ENCODE measurements at regions of chr2 and their contacts with region 1.

Region 1: DNA sequence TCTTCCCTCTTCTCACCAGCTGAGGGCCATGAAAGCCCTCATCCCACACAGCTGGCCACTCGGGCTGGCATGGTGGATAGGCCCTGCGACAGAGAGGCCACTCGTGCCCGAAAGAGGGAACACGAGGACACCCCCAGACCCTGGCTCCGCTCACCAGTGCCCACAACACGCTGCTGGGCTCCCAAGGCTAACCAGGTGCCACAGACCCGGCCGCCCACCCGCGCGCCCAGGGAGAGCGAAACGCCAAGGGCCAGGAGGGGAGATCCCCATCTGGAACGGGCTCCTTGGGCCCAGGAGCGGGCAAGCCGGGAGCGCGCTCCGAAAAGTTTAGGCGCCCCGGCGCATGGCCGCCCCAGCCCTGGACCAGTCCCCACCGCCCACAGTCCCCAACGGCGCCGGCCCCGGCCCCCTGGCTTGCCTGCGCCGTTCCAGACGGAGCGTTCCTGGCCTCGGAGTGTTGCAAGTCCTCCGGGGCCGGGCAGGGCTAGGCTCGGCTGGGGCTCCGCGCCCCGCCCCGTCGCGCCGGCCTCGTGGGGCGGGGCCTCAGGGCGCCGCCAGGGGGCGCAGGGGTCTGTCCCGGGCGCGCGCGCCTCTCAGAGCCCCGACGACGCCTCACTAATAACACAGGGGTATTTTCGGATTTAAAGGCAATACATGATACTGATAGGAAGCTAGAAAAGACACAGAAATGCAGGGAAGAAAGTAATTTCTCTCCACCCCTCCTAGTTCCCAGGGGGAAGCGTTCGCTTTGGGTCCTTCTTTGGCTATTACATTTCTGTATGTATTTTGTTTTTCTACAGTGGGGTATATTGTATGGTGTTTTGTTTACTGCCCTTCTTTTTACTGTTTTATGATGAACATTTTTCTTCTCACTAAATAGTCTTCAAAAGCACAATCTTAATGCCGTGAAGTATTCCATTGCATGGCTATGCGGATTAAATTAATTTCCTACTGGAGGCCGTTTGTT is at the start of gene TMBIM1:
- DNase-seq: peak; percentile 74 to 85
- ATAC-seq: peak; percentile 83 to 96 (median 88)
- H3K4me3 ChIP-seq: peak within 1 kb of the TSS; percentile 71 to 99 (median 92)
- H3K27ac ChIP-seq: peak within 1 kb of the TSS; percentile 95 to 100 (median 98)
- H3K4me1 ChIP-seq: peaks cover 16 to 72% (median 48%) of the 10 kb centered on the region in 9 donors
- H3K27me3 ChIP-seq: no peaks in the 10 kb centered on the region
- CTCF ChIP-seq: peak; percentile 76 to 99 (median 96)
- total RNA-seq, gene TMBIM1: 85.3 to 151 (median 110) TPM

Region 2: GRCh38 chr2:218216674-218217359 is 75.5 kb before region 1 on chr2 and contains the start of gene ARPC2:
- intact Hi-C with region 1: loop called in 1 of 10 experiments (anchors 2 kb)
- DNase-seq: peak; percentile 95 to 96
- ATAC-seq: peak; percentile 97 to 99 (median 98)
- H3K4me3 ChIP-seq: peak within 1 kb of the TSS; percentile 78 to 97 (median 94)
- H3K27ac ChIP-seq: peak within 1 kb of the TSS; percentile 58 to 99 (median 94)
- H3K4me1 ChIP-seq: peaks cover 11 to 53% (median 44%) of the 10 kb centered on the region in 9 donors
- H3K27me3 ChIP-seq: no peaks in the 10 kb centered on the region
- CTCF ChIP-seq: peak in 2 of 9 donors; percentile 5 to 20
- total RNA-seq, gene ARPC2: 120 to 213 (median 134) TPM

Region 3: GRCh38 chr2:218466016-218466521 is 173.7 kb after region 1 on chr2:
- intact Hi-C with region 1: loop called in 3 of 10 experiments (anchors 5 to 10 kb)
- DNase-seq: no peak
- ATAC-seq: peak in 3 of 8 donors; percentile 37 to 53 (median 44)
- H3K4me3 ChIP-seq: no peak overlapping the region
- H3K27ac ChIP-seq: no peak overlapping the region
- H3K4me1 ChIP-seq: peaks cover 0 to 8% (median 0%) of the 10 kb centered on the region in 9 donors
- H3K27me3 ChIP-seq: no peaks in the 10 kb centered on the region
- CTCF ChIP-seq: peak in 8 of 9 donors; percentile 30 to 68 (median 60)

Region 4: DNA sequence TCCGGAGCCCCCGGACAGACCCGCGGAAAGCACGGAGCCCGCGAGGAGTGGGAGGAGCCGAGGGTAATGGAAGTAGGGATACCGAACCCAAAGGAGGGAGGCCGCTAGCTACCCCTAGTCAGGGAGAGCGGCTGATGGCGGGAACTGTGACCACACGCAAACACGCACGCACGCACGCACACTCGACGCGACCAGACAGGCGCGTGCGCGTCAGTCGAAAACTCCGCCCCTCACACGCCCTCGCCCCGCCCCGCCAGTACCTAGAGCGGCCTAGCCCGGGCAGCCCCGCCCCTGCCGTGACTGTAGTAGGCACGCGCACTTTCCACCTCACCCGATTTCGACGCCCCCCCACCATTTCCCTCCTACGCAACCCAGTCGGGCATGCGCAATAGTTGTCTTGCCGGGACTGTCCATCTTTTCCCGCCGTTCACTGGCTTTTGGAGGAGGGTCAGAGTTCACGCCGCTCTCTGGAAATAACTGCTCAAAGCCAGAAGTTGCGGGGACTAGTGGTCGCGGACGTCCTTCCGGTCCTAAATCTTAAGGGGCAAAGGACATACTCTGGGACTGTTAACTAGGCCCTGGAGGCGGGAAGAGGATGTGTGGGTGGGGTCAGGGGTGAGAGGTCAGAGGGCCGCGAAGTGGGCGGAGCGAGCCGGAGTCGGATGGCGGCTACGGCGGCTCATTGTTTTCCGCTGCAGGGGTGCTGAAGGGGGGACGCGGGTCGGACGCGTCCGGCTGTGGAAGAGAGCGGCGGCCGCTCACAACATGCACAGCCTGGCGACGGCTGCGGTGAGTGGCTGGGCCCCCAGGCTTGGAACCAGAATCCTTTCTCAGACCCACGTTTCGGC is 276.1 kb after region 1 on chr2 and contains the starts of genes CNOT9 and USP37:
- intact Hi-C with region 1: loop called in 1 of 10 experiments (anchors 10 kb)
- DNase-seq: peak; percentile 100
- ATAC-seq: peak; percentile 97 to 99 (median 98)
- H3K4me3 ChIP-seq: peak within 1 kb of the TSS; percentile 61 to 96 (median 84)
- H3K27ac ChIP-seq: peak within 1 kb of the TSS; percentile 68 to 97 (median 94)
- H3K4me1 ChIP-seq: peaks cover 8 to 49% (median 45%) of the 10 kb centered on the region in 9 donors
- H3K27me3 ChIP-seq: no peaks in the 10 kb centered on the region
- CTCF ChIP-seq: no peak
- total RNA-seq, gene CNOT9: 15.7 to 28.2 (median 21.1) TPM
- total RNA-seq, gene USP37: 6.3 to 11.1 (median 8.5) TPM